ENCODE measurements at regions of chr22 and their contacts with region 1.

Region 1: DNA sequence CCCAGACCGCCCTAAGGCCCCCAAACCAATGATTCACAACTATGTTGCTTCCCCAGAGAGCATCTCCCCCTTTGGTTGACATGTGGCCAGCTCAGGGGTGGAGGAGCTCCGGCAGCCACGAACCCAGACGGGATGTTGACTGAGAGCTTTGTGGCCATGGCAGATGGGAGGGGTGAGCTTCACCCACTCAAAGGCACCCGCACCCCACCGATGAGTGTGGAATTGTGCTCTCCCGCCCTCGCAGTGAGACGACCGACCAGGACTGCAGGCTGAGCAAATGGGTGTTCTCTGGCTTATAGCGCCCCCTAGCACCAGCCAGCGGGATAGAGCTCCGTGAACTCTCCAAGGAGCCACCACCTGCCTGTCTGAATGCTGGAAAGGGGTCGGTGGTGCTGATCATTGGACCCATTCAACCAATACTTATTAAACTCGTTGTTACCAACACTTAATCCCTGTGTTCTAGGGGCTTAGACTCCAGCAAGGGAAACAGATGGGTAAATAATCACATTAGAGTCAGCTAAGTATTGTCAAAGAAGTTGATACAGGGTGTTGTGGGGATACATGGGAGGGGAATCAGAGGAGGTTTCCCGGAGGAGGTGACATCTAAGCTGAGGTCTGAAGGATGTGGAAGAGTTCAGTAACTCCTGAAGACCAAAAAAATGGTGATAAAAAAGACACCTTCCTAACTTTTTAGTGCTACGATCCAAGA is 4.5 kb upstream of the TIMP3 start:
- DNase-seq: peak; percentile 77 to 87 (median 84)
- ATAC-seq: peak; percentile 28 to 74 (median 66)
- H3K4me3 ChIP-seq: no peak overlapping the region
- H3K27ac ChIP-seq: peak overlapping the region in 6 of 12 donors; percentile 11 to 51 (median 29)
- H3K4me1 ChIP-seq: peaks cover 0 to 37% (median 13%) of the 10 kb centered on the region in 12 donors
- H3K27me3 ChIP-seq: peaks cover 0 to 13% (median 0%) of the 10 kb centered on the region in 9 donors
- CTCF ChIP-seq: peak; percentile 82 to 93 (median 91)
- POLR2A ChIP-seq: no peak

Region 2: DNA sequence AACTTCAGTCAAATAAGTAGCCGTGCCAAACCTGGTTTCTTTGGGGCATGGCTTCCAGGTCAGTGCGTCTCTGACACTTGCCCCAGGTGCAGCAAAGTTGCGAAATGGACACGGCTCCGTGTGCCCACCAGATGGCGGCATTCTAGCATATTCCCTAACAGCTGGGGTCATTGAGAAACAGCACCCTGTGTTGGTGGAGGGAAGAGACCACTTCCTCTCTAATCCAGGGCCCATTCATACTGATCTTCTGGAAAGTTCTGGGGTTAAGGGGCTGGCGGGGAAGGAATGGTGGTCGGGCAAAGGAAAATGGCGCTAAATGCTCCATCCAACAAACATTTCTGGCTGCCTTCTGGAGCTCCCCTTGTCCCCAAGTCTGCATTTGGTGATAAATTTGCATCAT is 136.7 kb before region 1 on chr22:
- intact Hi-C with region 1: loop called (anchors 1 to 5 kb)
- DNase-seq: peak; percentile 66 to 79 (median 73)
- ATAC-seq: peak in 3 of 4 donors; percentile 64 to 79 (median 78)
- H3K4me3 ChIP-seq: no peak overlapping the region
- H3K27ac ChIP-seq: peak overlapping the region in 3 of 12 donors; percentile 32 to 69 (median 42)
- H3K4me1 ChIP-seq: peaks cover 0 to 27% (median 0%) of the 10 kb centered on the region in 12 donors
- H3K27me3 ChIP-seq: no peaks in the 10 kb centered on the region
- CTCF ChIP-seq: peak; percentile 66 to 88 (median 74)
- POLR2A ChIP-seq: no peak

Region 3: DNA sequence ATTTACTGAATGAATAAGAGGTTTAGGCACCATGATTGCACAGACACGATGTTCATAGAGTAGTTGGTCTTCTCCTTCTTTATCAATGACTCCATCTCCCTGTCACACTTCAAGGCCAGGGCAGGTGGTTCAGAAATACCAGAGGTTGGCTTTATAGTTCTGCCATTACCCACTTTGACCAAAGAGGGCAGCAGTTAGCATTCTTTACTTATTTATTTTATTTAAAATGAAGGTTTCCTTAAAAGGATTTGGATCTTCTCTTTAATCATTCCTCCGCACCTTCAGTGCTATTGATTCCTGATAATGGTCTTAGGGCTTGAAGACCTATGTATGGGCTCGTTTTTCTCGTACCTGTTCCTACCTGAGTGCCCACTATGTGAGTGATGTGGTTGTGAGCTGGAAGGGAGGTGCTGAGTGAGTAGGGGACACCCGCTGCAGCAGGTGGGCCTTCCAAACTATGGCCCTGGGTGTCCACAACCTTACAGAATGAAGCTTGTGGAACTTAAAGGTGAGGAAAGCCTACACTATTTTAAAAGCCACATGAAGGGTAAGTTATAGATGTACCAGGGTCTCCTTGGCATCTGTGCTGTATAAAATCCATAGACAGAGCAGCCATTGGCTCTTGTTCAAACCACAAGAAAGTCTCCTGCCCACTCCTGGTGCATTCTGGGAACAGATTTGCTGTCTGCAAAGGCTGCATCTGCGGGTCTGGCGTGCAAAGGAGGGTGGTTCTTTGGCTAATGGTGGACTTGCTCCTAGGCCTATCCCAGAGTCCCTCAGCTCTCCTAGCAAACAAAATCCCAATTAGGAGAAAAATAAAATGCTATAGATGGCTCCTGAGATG is 39.5 kb after region 1 on chr22:
- intact Hi-C with region 1: loop called in 3 of 10 experiments (anchors 5 kb)
- DNase-seq: no peak
- ATAC-seq: no peak
- H3K4me3 ChIP-seq: no peak overlapping the region
- H3K27ac ChIP-seq: peak overlapping the region in 6 of 12 donors; percentile 1 to 78 (median 23)
- H3K4me1 ChIP-seq: peaks cover 14 to 100% (median 89%) of the 10 kb centered on the region in 12 donors
- H3K27me3 ChIP-seq: no peaks in the 10 kb centered on the region
- CTCF ChIP-seq: peak; percentile 28 to 63 (median 43)
- POLR2A ChIP-seq: no peak

Region 4: DNA sequence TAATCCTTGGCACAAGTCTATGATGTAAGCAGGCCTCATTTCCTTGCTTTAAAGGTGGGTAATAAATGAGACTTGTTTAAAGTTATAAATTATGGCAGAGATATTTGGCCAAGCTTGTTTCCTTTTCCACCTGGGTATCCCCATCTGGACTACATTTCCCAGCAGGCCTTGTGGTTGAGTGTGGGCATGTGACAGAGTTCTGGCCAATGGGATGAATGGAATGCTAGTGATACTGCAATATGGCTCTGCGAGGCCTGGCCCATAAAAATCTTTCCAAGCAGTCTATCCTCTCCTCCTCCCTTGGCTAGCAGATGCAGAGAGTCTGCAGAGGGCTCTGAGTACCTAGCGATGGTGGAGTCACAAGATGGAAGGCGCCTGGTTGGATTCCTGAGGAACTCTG is 107.0 kb after region 1 on chr22:
- intact Hi-C with region 1: loop called in 1 of 10 experiments (anchors 5 kb)
- DNase-seq: peak in 4 of 5 donors; percentile 29 to 52 (median 38)
- ATAC-seq: peak; percentile 81 to 93 (median 86)
- H3K4me3 ChIP-seq: no peak overlapping the region
- H3K27ac ChIP-seq: no peak overlapping the region
- H3K4me1 ChIP-seq: peaks cover 0 to 9% (median 0%) of the 10 kb centered on the region in 12 donors
- H3K27me3 ChIP-seq: no peaks in the 10 kb centered on the region
- CTCF ChIP-seq: no peak
- POLR2A ChIP-seq: no peak

Region 5: GRCh38 chr22:33000342-33001280 is 203.6 kb after region 1 on chr22:
- intact Hi-C with region 1: loop called in 2 of 10 experiments (anchors 5 kb)
- DNase-seq: peak; percentile 45 to 77 (median 54)
- ATAC-seq: peak in 3 of 4 donors; percentile 75 to 79 (median 78)
- H3K4me3 ChIP-seq: no peak overlapping the region
- H3K27ac ChIP-seq: no peak overlapping the region
- H3K4me1 ChIP-seq: peaks cover 0 to 14% (median 5%) of the 10 kb centered on the region in 12 donors
- H3K27me3 ChIP-seq: no peaks in the 10 kb centered on the region
- CTCF ChIP-seq: peak; percentile 84 to 98 (median 94)
- POLR2A ChIP-seq: no peak